Mucosa of descending colon (tissue), 3 donors: ENCODE measurements at regions of chr22 and their contacts with region 1.

Region 1: GRCh38 chr22:30920407-30920806 is 48.2 kb downstream of the MORC2 start:
- DNase-seq: peak; percentile 68 to 91 (median 84)
- ATAC-seq: peak; percentile 78
- H3K4me3 ChIP-seq: no peak overlapping the region
- H3K4me1 ChIP-seq: peaks cover 4% of the 10 kb centered on the region
- CTCF ChIP-seq: peak; percentile 90

Region 2: DNA sequence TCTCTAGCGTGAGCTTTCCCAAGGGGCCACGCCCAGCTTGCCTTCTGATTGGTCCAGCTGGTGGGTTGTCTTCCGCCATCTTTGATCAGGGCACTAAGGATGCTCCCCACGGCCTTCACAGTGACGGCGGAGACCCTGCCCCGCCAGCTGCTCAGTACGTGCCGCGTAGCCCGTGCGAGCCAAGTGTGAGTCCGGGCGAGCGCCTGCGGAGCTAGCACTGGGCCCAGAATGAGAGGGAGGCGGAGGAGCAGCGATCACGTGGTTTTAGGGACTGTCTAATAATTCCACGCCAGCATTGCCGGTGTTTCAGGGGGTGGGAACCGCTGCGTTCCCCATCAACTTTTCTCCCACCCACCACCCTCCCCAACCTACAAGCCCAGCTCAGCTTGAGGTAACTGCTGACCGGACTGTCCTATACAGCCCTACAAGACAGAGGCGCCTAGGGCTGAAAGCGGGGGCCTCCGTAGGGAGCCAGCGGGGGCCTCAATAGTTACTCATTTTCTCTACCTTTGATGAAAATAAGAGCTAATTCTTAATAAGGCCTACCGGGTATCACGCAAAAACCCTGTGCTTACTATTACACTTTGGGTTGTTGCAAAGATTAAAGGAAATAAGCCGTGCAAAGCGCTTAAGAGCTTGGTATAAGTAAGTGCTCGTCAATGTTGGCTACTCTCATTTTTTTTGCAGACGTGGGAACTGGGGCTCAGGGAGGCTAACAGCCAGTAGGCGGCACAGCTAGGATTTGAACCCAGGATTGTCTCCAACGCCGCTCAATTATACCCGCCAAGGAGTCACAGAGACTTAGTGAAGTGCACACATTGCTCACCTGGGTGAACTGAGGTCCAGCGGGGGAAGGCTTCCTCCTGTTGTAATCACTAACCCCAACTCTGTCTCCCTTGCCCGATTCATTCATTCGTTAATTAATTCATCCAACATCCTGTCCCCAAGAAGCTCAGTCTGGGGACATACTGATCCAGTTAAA is 496.1 kb before region 1 on chr22:
- intact Hi-C with region 1: no loop called
- DNase-seq: peak; percentile 97 to 99 (median 99)
- ATAC-seq: peak; percentile 83
- H3K4me3 ChIP-seq: peak overlapping the region; percentile 36
- H3K4me1 ChIP-seq: peaks cover 39% of the 10 kb centered on the region
- CTCF ChIP-seq: no peak

Region 3: GRCh38 chr22:30763815-30764686 is 156.4 kb before region 1 on chr22:
- intact Hi-C with region 1: loop called in 1 of 2 experiments (anchors 5 kb)
- DNase-seq: peak in 1 of 3 donors; percentile 24
- ATAC-seq: peak; percentile 84
- H3K4me3 ChIP-seq: no peak overlapping the region
- H3K4me1 ChIP-seq: no peaks in the 10 kb centered on the region
- CTCF ChIP-seq: peak; percentile 29